CD4-positive, alpha-beta memory T cell (primary cell): ENCODE measurements at regions of chr6 and their contacts with region 1.

Region 1: DNA sequence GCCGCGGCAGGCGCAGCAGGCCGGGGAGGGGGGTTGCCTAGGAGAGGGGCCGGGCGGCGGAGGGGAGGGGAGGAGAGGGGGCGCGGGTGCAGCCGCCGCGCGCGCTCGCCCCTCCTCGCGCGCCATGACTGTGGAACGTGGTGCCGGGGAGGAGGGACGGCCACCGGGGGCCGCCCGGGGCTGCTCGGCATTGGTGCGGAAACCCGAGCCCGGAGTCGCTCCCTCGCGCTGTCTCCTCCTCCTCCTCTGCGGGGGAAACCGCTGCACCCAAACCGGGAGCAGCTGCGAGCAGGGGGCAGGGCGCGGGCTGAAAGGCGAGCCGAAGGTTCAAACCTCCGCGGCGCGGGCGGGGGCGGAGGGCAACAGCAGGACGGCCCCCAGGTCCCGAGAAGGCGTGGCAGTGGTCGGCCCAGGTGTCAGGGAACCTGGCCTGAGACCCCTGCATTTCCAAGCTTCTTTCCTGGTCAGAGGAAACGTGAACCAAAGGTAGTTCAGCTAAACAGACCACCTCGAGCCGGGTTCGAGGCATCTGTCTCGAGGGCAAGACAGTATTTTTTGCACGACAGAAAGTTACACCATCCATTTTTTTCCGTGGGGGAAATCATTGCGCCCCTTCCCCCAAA is 1.4 kb upstream of the TRERF1 start:
- DNase-seq: peak; percentile 75 to 82 (median 77)
- H3K4me3 ChIP-seq: peak overlapping the region; percentile 68 to 72
- H3K4me3 Mint-ChIP-seq: peak overlapping the region; percentile 93 to 100 (median 96)
- H3K27ac ChIP-seq: peak overlapping the region; percentile 36
- H3K27ac Mint-ChIP-seq: peak overlapping the region in 3 of 7 donors; percentile 10 to 80 (median 75)
- H3K4me1 ChIP-seq: peaks cover 31% of the 10 kb centered on the region
- H3K4me1 Mint-ChIP-seq: peaks cover 25 to 53% (median 29%) of the 10 kb centered on the region in 4 donors
- H3K27me3 ChIP-seq: no peaks in the 10 kb centered on the region
- H3K27me3 Mint-ChIP-seq: no peaks in the 10 kb centered on the region

Region 2: DNA sequence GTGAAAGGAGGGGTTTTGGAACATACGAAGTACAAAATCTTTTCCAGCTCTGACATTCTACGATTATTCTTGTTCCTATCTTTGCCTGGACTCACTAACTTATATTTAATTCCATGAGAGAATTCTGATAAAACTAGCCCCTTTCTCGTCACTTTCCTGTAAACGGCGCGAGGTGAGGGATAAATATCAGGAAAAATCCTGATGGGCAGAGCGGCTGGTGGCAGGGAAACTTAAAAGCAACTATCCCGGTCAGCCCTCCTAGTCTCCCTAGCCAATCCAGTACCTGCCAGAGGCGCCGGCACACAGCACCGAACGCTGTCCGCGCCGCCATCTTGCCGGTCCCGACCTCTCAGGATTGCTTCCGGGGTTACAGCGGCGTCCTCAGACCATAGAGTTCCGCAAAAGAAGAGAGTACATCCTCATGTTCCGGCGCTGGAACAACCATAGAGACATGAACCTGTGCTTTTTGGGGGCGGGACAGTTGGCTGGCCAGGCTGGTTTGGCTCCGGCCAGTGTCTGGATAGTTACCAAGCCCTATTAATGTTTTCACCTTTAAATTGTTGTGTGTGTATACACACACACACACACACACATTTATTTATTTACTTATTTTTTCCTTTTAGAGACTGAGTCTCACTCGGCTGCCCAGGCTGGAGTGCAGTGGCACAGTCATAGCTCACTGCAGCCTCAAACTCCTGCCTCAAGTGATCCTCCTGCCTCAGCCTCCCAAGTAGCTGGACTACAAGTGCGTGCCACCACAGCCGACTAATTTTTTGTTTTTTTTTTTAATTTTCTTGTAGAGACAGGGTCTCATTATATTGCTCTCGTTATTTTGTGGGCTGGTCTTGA is 235.4 kb before region 1 on chr6 and contains the start of gene MRPS10:
- CTCF ChIA-PET with region 1: no interaction called
- POLR2A ChIA-PET with region 1: interaction called, 3 read pairs
- intact Hi-C with region 1: loop called (anchors 1 kb)
- DNase-seq: peak; percentile 88 to 93 (median 90)
- H3K4me3 ChIP-seq: peak within 1 kb of the TSS; percentile 71 to 72
- H3K4me3 Mint-ChIP-seq: peak within 1 kb of the TSS; percentile 95 to 99 (median 98)
- H3K27ac ChIP-seq: peak within 1 kb of the TSS; percentile 81
- H3K27ac Mint-ChIP-seq: peak within 1 kb of the TSS; percentile 90 to 98 (median 97)
- H3K4me1 ChIP-seq: peaks cover 29% of the 10 kb centered on the region
- H3K4me1 Mint-ChIP-seq: peaks cover 12 to 28% (median 20%) of the 10 kb centered on the region in 4 donors
- H3K27me3 ChIP-seq: no peaks in the 10 kb centered on the region
- H3K27me3 Mint-ChIP-seq: no peaks in the 10 kb centered on the region
- total RNA-seq, gene MRPS10: 22.6 to 25.1 TPM

Region 3: GRCh38 chr6:42255050-42255449 is 198.1 kb before region 1 on chr6:
- CTCF ChIA-PET with region 1: no interaction called
- POLR2A ChIA-PET with region 1: no interaction called
- intact Hi-C with region 1: no loop called
- DNase-seq: no peak
- H3K4me3 ChIP-seq: no peak overlapping the region
- H3K4me3 Mint-ChIP-seq: no peak overlapping the region
- H3K27ac ChIP-seq: no peak overlapping the region
- H3K27ac Mint-ChIP-seq: no peak overlapping the region
- H3K4me1 ChIP-seq: no peaks in the 10 kb centered on the region
- H3K4me1 Mint-ChIP-seq: no peaks in the 10 kb centered on the region
- H3K27me3 ChIP-seq: no peaks in the 10 kb centered on the region
- H3K27me3 Mint-ChIP-seq: no peaks in the 10 kb centered on the region

Region 4: GRCh38 chr6:42367353-42368011 is 85.7 kb before region 1 on chr6:
- CTCF ChIA-PET with region 1: interaction called, 4 read pairs
- POLR2A ChIA-PET with region 1: interaction called, 78 read pairs
- intact Hi-C with region 1: loop called (anchors 1 kb)
- DNase-seq: peak in 1 of 5 donors; percentile 29
- H3K4me3 ChIP-seq: peak overlapping the region; percentile 19 to 48
- H3K4me3 Mint-ChIP-seq: peak overlapping the region; percentile 76 to 89 (median 82)
- H3K27ac ChIP-seq: peak overlapping the region; percentile 48
- H3K27ac Mint-ChIP-seq: peak overlapping the region; percentile 90 to 95 (median 94)
- H3K4me1 ChIP-seq: peaks cover 72% of the 10 kb centered on the region
- H3K4me1 Mint-ChIP-seq: peaks cover 55 to 86% (median 70%) of the 10 kb centered on the region in 4 donors
- H3K27me3 ChIP-seq: no peaks in the 10 kb centered on the region
- H3K27me3 Mint-ChIP-seq: no peaks in the 10 kb centered on the region

Region 5: GRCh38 chr6:42402184-42402583 is 51.0 kb before region 1 on chr6:
- CTCF ChIA-PET with region 1: interaction called, 8 read pairs
- POLR2A ChIA-PET with region 1: interaction called, 43 read pairs
- intact Hi-C with region 1: loop called (anchors 5 kb)
- DNase-seq: peak in 1 of 5 donors; percentile 65
- H3K4me3 ChIP-seq: no peak overlapping the region
- H3K4me3 Mint-ChIP-seq: peak overlapping the region; percentile 31 to 77 (median 58)
- H3K27ac ChIP-seq: no peak overlapping the region
- H3K27ac Mint-ChIP-seq: peak overlapping the region; percentile 61 to 95 (median 90)
- H3K4me1 ChIP-seq: peaks cover 86% of the 10 kb centered on the region
- H3K4me1 Mint-ChIP-seq: peaks cover 67 to 97% (median 80%) of the 10 kb centered on the region in 4 donors
- H3K27me3 ChIP-seq: no peaks in the 10 kb centered on the region
- H3K27me3 Mint-ChIP-seq: no peaks in the 10 kb centered on the region

Region 6: GRCh38 chr6:42423244-42423643 is 29.9 kb before region 1 on chr6:
- CTCF ChIA-PET with region 1: interaction called, 9 read pairs
- POLR2A ChIA-PET with region 1: interaction called, 112 read pairs
- intact Hi-C with region 1: loop called (anchors 2 kb)
- DNase-seq: peak in 2 of 5 donors; percentile 22 to 45
- H3K4me3 ChIP-seq: peak overlapping the region in 1 of 2 donors; percentile 59
- H3K4me3 Mint-ChIP-seq: peak overlapping the region; percentile 84 to 96 (median 88)
- H3K27ac ChIP-seq: no peak overlapping the region
- H3K27ac Mint-ChIP-seq: peak overlapping the region; percentile 21 to 92 (median 85)
- H3K4me1 ChIP-seq: peaks cover 70% of the 10 kb centered on the region
- H3K4me1 Mint-ChIP-seq: peaks cover 50 to 81% (median 65%) of the 10 kb centered on the region in 4 donors
- H3K27me3 ChIP-seq: no peaks in the 10 kb centered on the region
- H3K27me3 Mint-ChIP-seq: no peaks in the 10 kb centered on the region

Region 7: DNA sequence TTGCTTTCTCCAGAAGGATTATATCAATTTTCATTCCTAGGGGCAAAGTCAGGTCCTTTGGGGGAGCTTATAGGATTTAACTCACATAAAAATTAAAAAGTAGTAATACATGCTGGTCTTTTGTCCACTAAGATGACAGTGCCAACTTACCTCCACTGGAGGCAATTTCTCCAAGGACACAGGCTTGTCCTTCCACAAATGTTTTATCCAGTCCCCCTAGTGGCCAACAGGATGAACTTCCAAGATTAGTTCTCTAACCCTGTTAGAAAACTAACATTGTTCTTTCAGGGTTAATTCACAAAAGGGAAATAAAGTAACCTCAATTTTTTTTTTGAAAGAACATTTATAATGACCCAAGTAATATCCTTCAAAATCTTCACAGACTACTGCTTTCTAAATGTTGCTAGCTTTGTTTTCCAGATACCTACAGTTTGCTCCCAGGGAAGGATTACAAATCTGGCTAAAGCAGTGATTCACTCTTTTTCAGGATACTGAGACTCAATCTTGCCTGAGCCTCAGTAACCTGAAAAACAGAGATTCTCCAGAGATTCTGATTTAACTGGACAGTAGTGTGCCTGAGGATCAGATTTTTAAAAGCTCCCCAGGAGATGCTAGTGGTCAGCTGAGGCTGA is 79.0 kb after region 1 on chr6:
- CTCF ChIA-PET with region 1: interaction called, 5 read pairs
- POLR2A ChIA-PET with region 1: interaction called, 7 read pairs
- intact Hi-C with region 1: loop called (anchors 2 kb)
- DNase-seq: peak in 4 of 5 donors; percentile 36 to 48 (median 42)
- H3K4me3 ChIP-seq: no peak overlapping the region
- H3K4me3 Mint-ChIP-seq: no peak overlapping the region
- H3K27ac ChIP-seq: no peak overlapping the region
- H3K27ac Mint-ChIP-seq: no peak overlapping the region
- H3K4me1 ChIP-seq: no peaks in the 10 kb centered on the region
- H3K4me1 Mint-ChIP-seq: peaks cover 0 to 3% (median 0%) of the 10 kb centered on the region in 4 donors
- H3K27me3 ChIP-seq: no peaks in the 10 kb centered on the region
- H3K27me3 Mint-ChIP-seq: no peaks in the 10 kb centered on the region